ENCODE measurements at regions of chr3 and their contacts with region 1.

Region 1: GRCh38 chr3:170055209-170055608 is 17.4 kb downstream of the GPR160 start:
- DNase-seq: no peak
- H3K4me3 ChIP-seq: no peak overlapping the region
- H3K27ac ChIP-seq: no peak overlapping the region
- H3K4me1 ChIP-seq: peaks cover 0 to 4% (median 0%) of the 10 kb centered on the region in 4 experiments
- H3K27me3 ChIP-seq: no peaks in the 10 kb centered on the region

Region 2: GRCh38 chr3:169863458-169863899 is 191.7 kb before region 1 on chr3:
- CTCF ChIA-PET with region 1: interaction called, 10 read pairs
- POLR2A ChIA-PET with region 1: no interaction called
- DNase-seq: peak; percentile 83 to 88 (median 85)
- H3K4me3 ChIP-seq: no peak overlapping the region
- H3K27ac ChIP-seq: no peak overlapping the region
- H3K4me1 ChIP-seq: peaks cover 2 to 13% (median 11%) of the 10 kb centered on the region in 4 experiments
- H3K27me3 ChIP-seq: peaks cover 0 to 9% (median 0%) of the 10 kb centered on the region in 5 experiments

Region 3: DNA sequence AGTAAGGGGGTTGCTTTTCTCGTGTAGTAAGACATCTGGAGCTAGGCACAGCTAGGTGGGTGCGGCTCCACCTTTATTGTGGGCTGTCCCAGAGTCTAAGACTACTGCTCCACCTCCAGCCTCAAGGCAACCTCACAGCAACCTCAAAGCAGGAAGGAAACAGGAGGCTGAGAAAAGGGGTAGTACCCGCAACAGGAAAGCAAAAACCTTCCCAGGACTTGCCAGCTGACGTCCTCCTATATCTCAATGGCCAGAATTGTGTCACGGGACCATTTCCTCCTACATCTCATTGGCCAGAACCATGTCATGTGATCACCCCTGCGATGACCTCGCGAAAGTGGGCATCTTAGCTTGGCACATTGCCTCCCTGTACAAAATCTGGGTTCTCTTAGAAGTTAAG is 21.7 kb before region 1 on chr3:
- CTCF ChIA-PET with region 1: interaction called, 13 read pairs
- POLR2A ChIA-PET with region 1: no interaction called
- DNase-seq: peak; percentile 76 to 90 (median 87)
- H3K4me3 ChIP-seq: peak overlapping the region in 2 of 7 experiments; percentile 20 to 22
- H3K27ac ChIP-seq: no peak overlapping the region
- H3K4me1 ChIP-seq: peaks cover 9 to 22% (median 19%) of the 10 kb centered on the region in 4 experiments
- H3K27me3 ChIP-seq: peaks cover 0 to 2% (median 0%) of the 10 kb centered on the region in 5 experiments

Region 4: GRCh38 chr3:170044795-170045244 is 10.4 kb before region 1 on chr3:
- CTCF ChIA-PET with region 1: interaction called, 12 read pairs
- POLR2A ChIA-PET with region 1: no interaction called
- DNase-seq: peak; percentile 42 to 74 (median 65)
- H3K4me3 ChIP-seq: peak overlapping the region in 4 of 7 experiments; percentile 13 to 47 (median 28)
- H3K27ac ChIP-seq: peak overlapping the region in 1 of 2 experiments; percentile 0
- H3K4me1 ChIP-seq: peaks cover 0 to 11% (median 9%) of the 10 kb centered on the region in 4 experiments
- H3K27me3 ChIP-seq: no peaks in the 10 kb centered on the region

Region 5: GRCh38 chr3:170162630-170163029 is 107.4 kb after region 1 on chr3:
- CTCF ChIA-PET with region 1: no interaction called
- POLR2A ChIA-PET with region 1: no interaction called
- DNase-seq: no peak
- H3K4me3 ChIP-seq: no peak overlapping the region
- H3K27ac ChIP-seq: no peak overlapping the region
- H3K4me1 ChIP-seq: no peaks in the 10 kb centered on the region
- H3K27me3 ChIP-seq: no peaks in the 10 kb centered on the region